ENCODE measurements at regions of chr6 and their contacts with region 1.

Region 1: DNA sequence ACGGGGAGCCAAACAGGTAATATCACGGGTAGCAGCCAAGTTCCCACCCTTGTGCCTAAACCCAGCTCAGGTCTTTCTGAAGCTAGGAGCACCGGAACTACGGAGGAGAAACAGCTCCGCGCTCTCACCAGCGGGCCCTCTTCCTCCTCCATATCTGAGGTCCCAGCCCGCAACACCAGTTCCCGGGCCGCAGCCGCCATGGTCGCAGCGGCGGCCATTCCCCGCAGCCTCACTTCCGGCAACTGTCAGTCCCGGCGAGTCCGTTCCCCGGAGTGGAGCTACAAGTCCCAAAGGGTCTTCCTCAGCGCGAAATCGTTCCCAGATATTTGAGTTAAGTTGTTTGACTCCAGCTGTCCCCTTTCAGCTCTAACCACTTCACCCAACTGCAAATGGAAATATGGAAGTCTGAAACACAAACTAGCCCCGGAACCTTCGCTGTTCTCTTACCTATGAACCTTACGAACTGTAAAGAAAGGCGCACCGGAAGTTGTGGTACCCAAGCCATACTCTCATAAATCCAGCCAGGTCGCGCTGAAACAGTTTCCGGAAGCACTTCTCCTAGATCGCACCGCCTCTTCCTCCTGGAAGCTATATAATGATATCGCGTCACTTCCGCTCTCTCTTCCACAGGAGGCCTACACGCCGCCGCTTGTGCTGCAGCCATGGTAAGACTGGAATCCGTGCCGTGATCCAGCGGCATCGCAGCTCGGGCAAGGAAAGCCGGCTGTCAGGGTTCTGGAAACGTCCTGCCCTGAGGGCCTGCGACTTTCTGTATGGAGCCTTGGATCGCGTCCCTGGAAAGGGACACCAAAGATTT is at the starts of genes RPS18 and VPS52:
- DNase-seq: peak; percentile 84 to 97 (median 93)
- ATAC-seq: peak; percentile 91
- H3K4me3 ChIP-seq: peak within 1 kb of the TSS; percentile 93
- H3K4me3 Mint-ChIP-seq: peak within 1 kb of the TSS; percentile 87 to 100 (median 98)
- H3K27ac ChIP-seq: peak within 1 kb of the TSS; percentile 91
- H3K27ac Mint-ChIP-seq: peak within 1 kb of the TSS; percentile 95 to 100 (median 99)
- H3K4me1 ChIP-seq: peaks cover 41 to 44% of the 10 kb centered on the region in 2 donors
- H3K4me1 Mint-ChIP-seq: peaks cover 34 to 81% (median 66%) of the 10 kb centered on the region in 7 donors
- H3K27me3 ChIP-seq: no peaks in the 10 kb centered on the region
- H3K27me3 Mint-ChIP-seq: peaks cover 0 to 3% (median 0%) of the 10 kb centered on the region in 5 donors
- total RNA-seq, gene RPS18: 2,454 to 4,896 (median 3,431) TPM
- total RNA-seq, gene VPS52: 74.3 to 110 (median 90.5) TPM

Region 2: DNA sequence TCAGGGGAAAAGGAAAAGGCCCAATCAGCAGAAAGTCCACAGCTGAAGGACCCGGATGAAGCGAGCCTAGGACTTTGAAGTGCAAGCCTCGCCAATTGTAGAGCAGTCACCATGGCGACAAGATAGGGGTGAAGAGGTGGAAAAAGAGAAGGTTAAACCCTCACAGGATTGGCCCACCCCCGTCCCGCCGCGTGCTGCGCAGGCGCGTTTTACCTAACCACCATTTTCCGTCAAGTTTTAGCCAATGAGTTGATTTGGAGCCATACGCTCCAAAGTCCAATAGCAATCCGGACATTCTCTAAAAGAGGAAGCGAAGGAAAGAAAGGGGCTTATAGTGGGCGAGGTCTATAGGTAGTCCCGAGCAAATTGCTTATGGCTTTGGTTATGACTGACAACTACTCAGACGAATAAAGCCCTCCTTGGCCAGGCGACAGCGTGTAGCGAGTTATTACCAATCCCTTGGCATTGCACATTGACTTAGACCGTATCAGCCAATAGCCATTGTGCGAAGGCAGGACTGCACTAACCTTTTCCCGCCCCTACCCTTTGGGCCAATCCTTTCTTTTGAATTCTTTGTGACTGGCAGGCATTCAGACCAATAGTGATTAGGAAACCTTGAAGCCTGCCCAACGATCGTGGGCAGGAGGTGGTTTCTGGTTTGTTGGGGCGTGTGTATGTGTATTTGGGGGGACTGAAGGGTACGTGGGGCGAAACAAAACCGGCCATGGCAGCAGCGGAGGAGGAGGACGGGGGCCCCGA is 1093.7 kb before region 1 on chr6 and contains the start of gene RNF5:
- CTCF ChIA-PET with region 1: no interaction called
- POLR2A ChIA-PET with region 1: no interaction called
- intact Hi-C with region 1: loop called in 1 of 2 experiments (anchors 2 kb)
- DNase-seq: peak; percentile 60 to 99 (median 97)
- ATAC-seq: peak; percentile 89
- H3K4me3 ChIP-seq: peak within 1 kb of the TSS; percentile 82
- H3K4me3 Mint-ChIP-seq: peak within 1 kb of the TSS; percentile 85 to 98 (median 95)
- H3K27ac ChIP-seq: peak within 1 kb of the TSS; percentile 91
- H3K27ac Mint-ChIP-seq: peak within 1 kb of the TSS; percentile 87 to 100 (median 95)
- H3K4me1 ChIP-seq: peaks cover 31 to 63% of the 10 kb centered on the region in 2 donors
- H3K4me1 Mint-ChIP-seq: peaks cover 63 to 86% (median 69%) of the 10 kb centered on the region in 7 donors
- H3K27me3 ChIP-seq: no peaks in the 10 kb centered on the region
- H3K27me3 Mint-ChIP-seq: no peaks in the 10 kb centered on the region
- total RNA-seq, gene RNF5: 17.0 to 50.6 (median 40.9) TPM

Region 3: GRCh38 chr6:32885698-32886286 is 385.9 kb before region 1 on chr6:
- CTCF ChIA-PET with region 1: no interaction called
- POLR2A ChIA-PET with region 1: no interaction called
- intact Hi-C with region 1: no loop called
- DNase-seq: peak in 7 of 9 donors; percentile 48 to 78 (median 68)
- ATAC-seq: peak; percentile 69
- H3K4me3 ChIP-seq: no peak overlapping the region
- H3K4me3 Mint-ChIP-seq: no peak overlapping the region
- H3K27ac ChIP-seq: no peak overlapping the region
- H3K27ac Mint-ChIP-seq: no peak overlapping the region
- H3K4me1 ChIP-seq: no peaks in the 10 kb centered on the region
- H3K4me1 Mint-ChIP-seq: peaks cover 0 to 4% (median 0%) of the 10 kb centered on the region in 7 donors
- H3K27me3 ChIP-seq: no peaks in the 10 kb centered on the region
- H3K27me3 Mint-ChIP-seq: peaks cover 0 to 10% (median 0%) of the 10 kb centered on the region in 5 donors

Region 4: DNA sequence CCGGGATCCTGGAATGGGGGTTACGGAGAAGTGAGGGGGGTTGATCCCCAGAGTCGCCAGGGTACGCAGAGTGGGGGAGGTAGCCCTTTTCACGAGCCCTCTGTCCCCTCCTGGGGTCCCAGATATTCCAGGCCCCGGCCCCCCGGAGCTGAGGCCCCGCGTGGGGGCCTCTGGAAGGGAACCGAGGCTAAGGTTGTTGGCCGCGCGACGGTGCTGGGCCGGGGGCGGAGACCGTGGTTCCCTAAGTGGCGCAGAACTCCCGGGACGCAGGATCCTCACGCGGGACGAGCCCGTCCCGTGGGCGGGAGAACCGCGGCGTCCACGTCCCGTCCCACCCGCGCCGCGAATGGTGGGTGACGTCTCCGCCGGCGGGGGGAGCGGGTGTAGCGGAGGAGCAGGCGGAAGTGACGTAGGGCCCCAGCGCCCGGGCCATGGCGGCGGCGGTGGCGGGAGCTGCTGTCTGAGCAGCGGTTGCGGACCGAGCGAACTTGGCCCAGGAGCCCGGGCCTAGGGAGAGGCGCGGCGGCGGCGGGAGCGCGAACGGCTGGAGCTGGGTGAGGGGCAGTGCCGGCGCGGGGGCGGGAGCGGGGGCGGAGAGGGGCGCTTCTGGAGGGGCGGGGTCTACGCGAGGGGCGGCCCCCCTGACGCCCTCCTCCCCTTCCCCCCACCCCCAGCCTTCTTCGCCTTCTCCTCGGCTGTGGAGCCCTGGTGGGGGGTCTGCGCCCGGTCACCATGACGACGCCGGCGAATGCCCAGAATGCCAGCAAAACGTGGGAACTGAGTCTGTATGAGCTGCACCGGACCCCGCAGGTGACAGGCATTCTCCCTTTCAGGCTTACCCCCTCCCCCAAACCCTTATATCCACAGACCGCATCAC is 63.3 kb before region 1 on chr6 and contains the start of gene RING1:
- CTCF ChIA-PET with region 1: no interaction called
- POLR2A ChIA-PET with region 1: interaction called, 24 read pairs
- intact Hi-C with region 1: loop called in 1 of 2 experiments (anchors 1 kb)
- DNase-seq: peak; percentile 80 to 93 (median 87)
- ATAC-seq: peak; percentile 79
- H3K4me3 ChIP-seq: peak within 1 kb of the TSS; percentile 92
- H3K4me3 Mint-ChIP-seq: peak within 1 kb of the TSS; percentile 83 to 97 (median 90)
- H3K27ac ChIP-seq: peak within 1 kb of the TSS; percentile 98
- H3K27ac Mint-ChIP-seq: peak within 1 kb of the TSS; percentile 87 to 96 (median 95)
- H3K4me1 ChIP-seq: peaks cover 23 to 34% of the 10 kb centered on the region in 2 donors
- H3K4me1 Mint-ChIP-seq: peaks cover 43 to 58% (median 52%) of the 10 kb centered on the region in 7 donors
- H3K27me3 ChIP-seq: peaks cover 0 to 3% of the 10 kb centered on the region in 2 donors
- H3K27me3 Mint-ChIP-seq: peaks cover 0 to 15% (median 6%) of the 10 kb centered on the region in 5 donors
- total RNA-seq, gene RING1: 36.2 to 47.2 (median 44.5) TPM

Region 5: DNA sequence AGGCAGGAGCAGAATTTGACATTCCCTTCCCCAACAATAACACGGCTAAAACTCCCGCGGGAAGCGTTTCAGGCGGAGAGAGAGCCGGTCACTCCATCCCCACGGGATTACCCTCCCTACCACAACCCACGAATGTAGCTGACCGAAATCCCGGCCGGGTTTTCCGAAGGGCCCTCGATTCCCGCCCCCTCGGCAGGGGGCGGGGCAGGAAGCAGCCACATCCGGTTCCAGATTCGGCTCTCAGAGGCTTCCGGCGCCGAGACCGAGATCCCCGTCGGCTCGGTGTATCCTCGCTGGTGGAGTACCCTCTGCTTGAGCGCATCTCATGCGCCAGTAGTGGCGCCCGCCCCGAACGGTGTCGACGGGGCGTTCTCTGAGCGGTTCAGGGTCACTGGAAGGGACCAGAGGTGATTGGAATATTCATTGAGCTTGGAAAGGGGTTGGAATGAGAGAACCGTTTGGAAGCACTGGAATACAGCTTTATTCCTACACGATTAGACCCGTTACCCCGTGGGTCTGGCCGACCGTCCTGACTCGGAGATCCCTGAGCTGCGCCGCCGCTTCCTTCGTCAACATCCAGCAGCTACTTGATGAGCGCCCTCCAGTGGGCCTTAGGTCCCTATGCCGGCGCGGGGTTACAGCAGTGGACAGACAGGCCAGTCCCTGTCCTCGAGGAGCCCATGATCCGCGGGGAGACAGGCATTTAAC is 27.7 kb after region 1 on chr6:
- CTCF ChIA-PET with region 1: interaction called, 10 read pairs
- POLR2A ChIA-PET with region 1: interaction called, 63 read pairs
- intact Hi-C with region 1: loop called (anchors 1 kb)
- DNase-seq: peak; percentile 89 to 96 (median 93)
- ATAC-seq: peak; percentile 88
- H3K4me3 ChIP-seq: peak overlapping the region; percentile 78
- H3K4me3 Mint-ChIP-seq: peak overlapping the region; percentile 95 to 100 (median 99)
- H3K27ac ChIP-seq: peak overlapping the region; percentile 92
- H3K27ac Mint-ChIP-seq: peak overlapping the region; percentile 95 to 100 (median 99)
- H3K4me1 ChIP-seq: peaks cover 5 to 10% of the 10 kb centered on the region in 2 donors
- H3K4me1 Mint-ChIP-seq: peaks cover 25 to 48% (median 38%) of the 10 kb centered on the region in 7 donors
- H3K27me3 ChIP-seq: no peaks in the 10 kb centered on the region
- H3K27me3 Mint-ChIP-seq: peaks cover 0 to 3% (median 0%) of the 10 kb centered on the region in 5 donors

Region 6: GRCh38 chr6:33317669-33318425 is 46.2 kb after region 1 on chr6 and contains the start of gene ZBTB22:
- CTCF ChIA-PET with region 1: interaction called, 6 read pairs
- POLR2A ChIA-PET with region 1: interaction called, 37 read pairs
- intact Hi-C with region 1: loop called (anchors 1 kb)
- DNase-seq: peak; percentile 87 to 97 (median 96)
- ATAC-seq: peak; percentile 73
- H3K4me3 ChIP-seq: peak within 1 kb of the TSS; percentile 97
- H3K4me3 Mint-ChIP-seq: peak within 1 kb of the TSS; percentile 81 to 100 (median 100)
- H3K27ac ChIP-seq: peak within 1 kb of the TSS; percentile 99
- H3K27ac Mint-ChIP-seq: peak within 1 kb of the TSS; percentile 97 to 99 (median 98)
- H3K4me1 ChIP-seq: peaks cover 59 to 62% of the 10 kb centered on the region in 2 donors
- H3K4me1 Mint-ChIP-seq: peaks cover 53 to 85% (median 75%) of the 10 kb centered on the region in 7 donors
- H3K27me3 ChIP-seq: no peaks in the 10 kb centered on the region
- H3K27me3 Mint-ChIP-seq: peaks cover 0 to 2% (median 0%) of the 10 kb centered on the region in 5 donors
- total RNA-seq, gene ZBTB22: 15.5 to 30.1 (median 20.5) TPM

Region 7: GRCh38 chr6:33344701-33345697 is 73.3 kb after region 1 on chr6:
- CTCF ChIA-PET with region 1: interaction called, 10 read pairs
- POLR2A ChIA-PET with region 1: interaction called, 37 read pairs
- intact Hi-C with region 1: loop called (anchors 1 kb)
- DNase-seq: peak; percentile 28 to 87 (median 82)
- ATAC-seq: peak; percentile 60
- H3K4me3 ChIP-seq: peak overlapping the region; percentile 64
- H3K4me3 Mint-ChIP-seq: peak overlapping the region; percentile 68 to 89 (median 86)
- H3K27ac ChIP-seq: peak overlapping the region; percentile 60
- H3K27ac Mint-ChIP-seq: peak overlapping the region; percentile 88 to 99 (median 96)
- H3K4me1 ChIP-seq: peaks cover 23 to 33% of the 10 kb centered on the region in 2 donors
- H3K4me1 Mint-ChIP-seq: peaks cover 22 to 54% (median 41%) of the 10 kb centered on the region in 7 donors
- H3K27me3 ChIP-seq: no peaks in the 10 kb centered on the region
- H3K27me3 Mint-ChIP-seq: peaks cover 0 to 7% (median 0%) of the 10 kb centered on the region in 5 donors

Region 8: DNA sequence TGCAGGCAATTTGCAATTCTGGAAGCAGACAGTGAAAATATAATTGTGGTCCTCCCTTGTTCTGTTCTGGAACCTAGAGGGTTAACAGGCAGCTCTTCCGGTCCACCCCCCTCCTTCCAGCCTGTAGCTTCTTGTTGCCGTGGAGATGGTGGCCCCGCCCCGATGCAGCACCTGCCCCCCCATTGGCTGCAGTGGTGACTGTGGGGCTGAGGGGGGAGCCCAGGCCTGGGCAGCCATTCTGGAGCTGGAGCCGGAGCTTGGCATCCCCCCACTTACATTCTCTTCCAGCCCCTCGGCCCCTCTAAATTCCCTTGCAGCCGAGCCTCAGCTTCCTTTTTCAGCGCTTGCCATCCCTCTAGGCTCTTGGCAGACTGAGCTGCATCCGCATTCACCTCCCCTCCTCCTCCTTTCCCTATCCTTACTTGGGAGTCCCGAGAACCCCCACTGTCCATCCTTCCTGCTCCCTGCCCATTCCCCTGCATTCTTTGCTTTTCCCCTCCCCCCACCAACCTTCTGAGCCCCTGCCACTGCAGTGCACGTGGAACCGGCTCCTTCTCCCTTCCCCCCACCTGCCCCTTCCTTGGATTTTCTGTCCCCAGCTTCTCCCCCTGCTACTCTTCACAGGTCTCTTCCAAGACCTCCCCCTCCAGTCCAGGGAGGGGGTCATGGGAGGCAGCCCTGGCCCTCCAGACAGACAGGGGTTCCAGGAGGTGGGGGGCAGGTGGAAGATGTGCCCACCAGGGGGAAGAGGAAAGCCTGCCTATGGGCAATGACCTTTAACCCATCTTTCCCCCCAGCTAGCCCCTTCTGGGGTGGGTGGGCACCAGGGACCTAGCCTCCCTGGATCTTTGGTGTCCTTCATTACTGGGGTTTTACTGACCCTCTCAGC is 159.6 kb after region 1 on chr6:
- CTCF ChIA-PET with region 1: interaction called, 5 read pairs
- POLR2A ChIA-PET with region 1: interaction called, 11 read pairs
- intact Hi-C with region 1: no loop called
- DNase-seq: peak; percentile 65 to 89 (median 87)
- ATAC-seq: peak; percentile 82
- H3K4me3 ChIP-seq: peak overlapping the region; percentile 52
- H3K4me3 Mint-ChIP-seq: peak overlapping the region; percentile 86 to 98 (median 92)
- H3K27ac ChIP-seq: peak overlapping the region; percentile 88
- H3K27ac Mint-ChIP-seq: peak overlapping the region; percentile 81 to 98 (median 96)
- H3K4me1 ChIP-seq: peaks cover 42 to 51% of the 10 kb centered on the region in 2 donors
- H3K4me1 Mint-ChIP-seq: peaks cover 56 to 69% (median 64%) of the 10 kb centered on the region in 7 donors
- H3K27me3 ChIP-seq: no peaks in the 10 kb centered on the region
- H3K27me3 Mint-ChIP-seq: no peaks in the 10 kb centered on the region

Region 9: DNA sequence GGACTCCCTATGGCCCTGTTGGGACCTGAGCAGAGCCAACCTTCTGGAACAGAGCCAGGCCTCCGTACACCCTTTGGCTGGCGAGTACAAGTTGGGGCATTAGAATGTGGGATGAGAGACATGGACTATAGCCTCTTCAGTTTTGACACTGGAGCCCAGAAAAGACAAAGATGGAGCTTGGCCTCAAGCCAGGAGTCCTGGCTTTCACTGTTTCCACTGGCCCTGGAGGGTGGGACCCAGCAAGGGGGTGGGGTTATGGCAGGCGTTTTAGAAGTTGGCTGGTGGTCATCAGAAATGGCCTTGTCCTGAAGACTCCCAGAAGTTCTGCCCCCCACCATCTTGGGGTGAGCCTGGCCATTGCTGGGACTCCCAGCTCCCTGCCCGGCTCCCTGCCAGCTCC is 371.2 kb after region 1 on chr6:
- CTCF ChIA-PET with region 1: no interaction called
- POLR2A ChIA-PET with region 1: no interaction called
- intact Hi-C with region 1: no loop called
- DNase-seq: no peak
- ATAC-seq: no peak
- H3K4me3 ChIP-seq: no peak overlapping the region
- H3K4me3 Mint-ChIP-seq: no peak overlapping the region
- H3K27ac ChIP-seq: no peak overlapping the region
- H3K27ac Mint-ChIP-seq: peak overlapping the region in 2 of 9 donors; percentile 44 to 48
- H3K4me1 ChIP-seq: no peaks in the 10 kb centered on the region
- H3K4me1 Mint-ChIP-seq: peaks cover 13 to 37% (median 32%) of the 10 kb centered on the region in 7 donors
- H3K27me3 ChIP-seq: no peaks in the 10 kb centered on the region
- H3K27me3 Mint-ChIP-seq: no peaks in the 10 kb centered on the region

Measured in naive thymus-derived CD4-positive, alpha-beta T cell (primary cell).